Activated CD4-positive, alpha-beta T cell treated with anti-CD3 and anti-CD28 coated beads for 36 hours (primary cell): ENCODE measurements at regions of chr12 and their contacts with region 1.

Region 1: GRCh38 chr12:3299929-3300832 is 190.8 kb upstream of the PRMT8 start:
- DNase-seq: peak; percentile 93
- ATAC-seq: peak; percentile 85
- H3K4me3 Mint-ChIP-seq: peak overlapping the region; percentile 54
- H3K27ac Mint-ChIP-seq: peak overlapping the region; percentile 82
- H3K4me1 Mint-ChIP-seq: peaks cover 10% of the 10 kb centered on the region
- H3K27me3 Mint-ChIP-seq: peaks cover 7% of the 10 kb centered on the region

Region 2: GRCh38 chr12:2988494-2988893 is 311.7 kb before region 1 on chr12:
- CTCF ChIA-PET with region 1: no interaction called
- POLR2A ChIA-PET with region 1: no interaction called
- intact Hi-C with region 1: no loop called
- DNase-seq: no peak
- ATAC-seq: no peak
- H3K4me3 Mint-ChIP-seq: no peak overlapping the region
- H3K27ac Mint-ChIP-seq: no peak overlapping the region
- H3K4me1 Mint-ChIP-seq: no peaks in the 10 kb centered on the region
- H3K27me3 Mint-ChIP-seq: peaks cover 2% of the 10 kb centered on the region

Region 3: GRCh38 chr12:3275171-3276041 is 24.8 kb before region 1 on chr12:
- CTCF ChIA-PET with region 1: interaction called, 30 read pairs
- POLR2A ChIA-PET with region 1: no interaction called
- intact Hi-C with region 1: no loop called
- DNase-seq: peak; percentile 87
- ATAC-seq: peak; percentile 83
- H3K4me3 Mint-ChIP-seq: no peak overlapping the region
- H3K27ac Mint-ChIP-seq: no peak overlapping the region
- H3K4me1 Mint-ChIP-seq: peaks cover 2% of the 10 kb centered on the region
- H3K27me3 Mint-ChIP-seq: peaks cover 8% of the 10 kb centered on the region

Region 4: DNA sequence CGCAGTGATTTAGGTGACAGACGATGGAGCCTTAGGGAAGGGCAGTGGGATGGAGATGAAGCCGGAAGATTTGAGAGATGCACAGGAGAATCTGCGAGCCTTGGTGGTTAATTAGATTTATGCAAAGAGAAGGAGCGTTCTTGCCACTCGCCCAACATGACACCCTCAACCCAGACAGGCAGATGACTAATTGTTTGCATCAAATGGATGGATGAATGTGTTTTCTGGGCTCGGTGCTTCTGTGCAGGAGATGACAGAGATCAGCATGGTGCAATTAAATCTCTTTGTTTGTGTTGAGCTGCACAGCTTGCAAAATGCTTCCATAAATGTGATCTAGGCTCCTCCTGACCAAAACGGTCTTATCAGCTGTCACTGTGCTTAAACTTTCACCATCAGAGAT is 11.5 kb before region 1 on chr12:
- CTCF ChIA-PET with region 1: interaction called, 15 read pairs
- POLR2A ChIA-PET with region 1: no interaction called
- intact Hi-C with region 1: no loop called
- DNase-seq: no peak
- ATAC-seq: no peak
- H3K4me3 Mint-ChIP-seq: no peak overlapping the region
- H3K27ac Mint-ChIP-seq: no peak overlapping the region
- H3K4me1 Mint-ChIP-seq: no peaks in the 10 kb centered on the region
- H3K27me3 Mint-ChIP-seq: no peaks in the 10 kb centered on the region

Region 5: GRCh38 chr12:3523058-3523457 is 222.9 kb after region 1 on chr12:
- CTCF ChIA-PET with region 1: interaction called, 10 read pairs
- POLR2A ChIA-PET with region 1: no interaction called
- intact Hi-C with region 1: loop called in 1 of 2 experiments (anchors 1 kb)
- DNase-seq: no peak
- ATAC-seq: no peak
- H3K4me3 Mint-ChIP-seq: no peak overlapping the region
- H3K27ac Mint-ChIP-seq: no peak overlapping the region
- H3K4me1 Mint-ChIP-seq: no peaks in the 10 kb centered on the region
- H3K27me3 Mint-ChIP-seq: no peaks in the 10 kb centered on the region

Region 6: GRCh38 chr12:3641428-3642018 is 341.3 kb after region 1 on chr12:
- CTCF ChIA-PET with region 1: interaction called, 4 read pairs
- POLR2A ChIA-PET with region 1: no interaction called
- intact Hi-C with region 1: loop called in 1 of 2 experiments (anchors 10 kb)
- DNase-seq: no peak
- ATAC-seq: no peak
- H3K4me3 Mint-ChIP-seq: no peak overlapping the region
- H3K27ac Mint-ChIP-seq: no peak overlapping the region
- H3K4me1 Mint-ChIP-seq: no peaks in the 10 kb centered on the region
- H3K27me3 Mint-ChIP-seq: no peaks in the 10 kb centered on the region

Region 7: DNA sequence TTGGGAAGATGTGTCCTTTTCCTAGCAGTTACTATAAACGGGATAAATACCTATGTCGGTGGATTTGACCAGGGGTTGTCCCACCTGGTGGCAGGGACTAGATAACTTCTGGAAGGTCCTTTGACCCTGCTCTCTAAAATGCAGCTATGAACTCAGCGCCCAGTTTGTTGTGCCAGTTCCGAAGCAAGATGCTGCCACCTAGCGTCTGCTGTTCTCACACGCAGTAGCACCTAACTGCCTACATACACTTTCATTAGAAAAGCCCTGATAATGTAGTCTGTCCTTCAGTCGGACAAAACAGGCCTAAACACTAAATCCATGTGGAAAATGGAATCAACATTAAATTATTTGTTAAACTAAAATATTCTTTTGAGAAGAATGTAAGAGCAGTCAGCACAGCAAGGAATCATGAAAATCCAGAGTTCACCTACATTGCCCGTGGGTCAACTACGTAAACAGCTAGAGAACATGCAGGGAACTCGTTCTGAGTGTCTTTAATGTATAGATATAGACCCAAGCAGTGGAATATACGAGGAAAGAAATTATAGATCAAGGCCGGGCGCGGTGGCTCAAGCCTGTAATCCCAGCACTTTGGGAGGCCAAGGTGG is 503.8 kb after region 1 on chr12:
- CTCF ChIA-PET with region 1: interaction called, 39 read pairs
- POLR2A ChIA-PET with region 1: no interaction called
- intact Hi-C with region 1: loop called (anchors 1 kb)
- DNase-seq: peak; percentile 84
- ATAC-seq: peak; percentile 87
- H3K4me3 Mint-ChIP-seq: no peak overlapping the region
- H3K27ac Mint-ChIP-seq: no peak overlapping the region
- H3K4me1 Mint-ChIP-seq: peaks cover 13% of the 10 kb centered on the region
- H3K27me3 Mint-ChIP-seq: no peaks in the 10 kb centered on the region